Left colon (tissue), 2 donors: ENCODE measurements at regions of chr10 and their contacts with region 1.

Region 1: GRCh38 chr10:119207367-119207668 is at the start of gene GRK5:
- DNase-seq: peak; percentile 94
- ATAC-seq: peak; percentile 93
- total RNA-seq, gene GRK5: 7.8 to 12.4 TPM

Region 2: DNA sequence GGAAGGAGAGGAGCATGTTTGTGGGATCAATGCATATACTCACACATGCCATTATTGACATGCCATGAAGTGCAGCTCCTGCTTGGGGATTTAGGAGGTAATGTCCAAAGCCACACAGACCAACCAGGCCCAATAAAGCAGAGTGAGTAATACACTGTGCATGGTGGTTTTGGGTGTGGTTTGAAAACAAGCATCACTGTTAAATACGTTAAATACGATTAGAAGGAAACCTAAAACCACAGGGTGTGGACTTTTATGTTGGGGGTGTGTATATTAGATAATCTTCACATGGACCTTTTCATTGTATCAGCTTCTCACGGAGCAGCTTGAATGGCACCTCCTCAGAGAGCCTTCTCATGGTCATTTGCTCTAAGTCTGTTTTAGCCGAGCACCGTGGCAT is 116.3 kb before region 1 on chr10:
- intact Hi-C with region 1: no loop called
- DNase-seq: peak in 1 of 2 donors; percentile 56
- ATAC-seq: peak; percentile 84

Region 3: GRCh38 chr10:119341459-119342301 is 134.4 kb after region 1 on chr10:
- intact Hi-C with region 1: no loop called
- DNase-seq: peak in 1 of 2 donors; percentile 46
- ATAC-seq: no peak

Region 4: DNA sequence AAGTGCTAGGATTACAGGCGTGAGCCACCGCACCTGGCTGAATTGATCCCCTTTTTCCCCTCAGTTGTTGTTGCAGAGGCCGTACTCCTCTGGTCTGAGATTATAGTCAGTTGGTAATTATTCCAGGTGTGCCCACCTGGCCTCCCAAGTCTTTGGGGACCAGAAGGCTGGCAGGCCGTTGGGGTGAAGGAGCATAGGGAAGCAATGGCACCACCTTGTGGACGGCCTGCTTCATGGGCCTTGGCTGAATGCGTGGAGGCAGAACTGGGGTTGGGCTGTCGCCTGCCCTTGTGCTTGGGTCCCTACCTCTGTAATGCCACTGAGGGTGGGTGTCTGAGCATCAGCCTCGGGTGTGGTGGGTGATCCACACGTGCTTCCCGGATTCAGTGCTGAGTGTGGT is 209.5 kb after region 1 on chr10:
- intact Hi-C with region 1: loop called in 1 of 2 experiments (anchors 10 kb)
- DNase-seq: peak in 1 of 2 donors; percentile 82
- ATAC-seq: peak; percentile 82

Region 5: DNA sequence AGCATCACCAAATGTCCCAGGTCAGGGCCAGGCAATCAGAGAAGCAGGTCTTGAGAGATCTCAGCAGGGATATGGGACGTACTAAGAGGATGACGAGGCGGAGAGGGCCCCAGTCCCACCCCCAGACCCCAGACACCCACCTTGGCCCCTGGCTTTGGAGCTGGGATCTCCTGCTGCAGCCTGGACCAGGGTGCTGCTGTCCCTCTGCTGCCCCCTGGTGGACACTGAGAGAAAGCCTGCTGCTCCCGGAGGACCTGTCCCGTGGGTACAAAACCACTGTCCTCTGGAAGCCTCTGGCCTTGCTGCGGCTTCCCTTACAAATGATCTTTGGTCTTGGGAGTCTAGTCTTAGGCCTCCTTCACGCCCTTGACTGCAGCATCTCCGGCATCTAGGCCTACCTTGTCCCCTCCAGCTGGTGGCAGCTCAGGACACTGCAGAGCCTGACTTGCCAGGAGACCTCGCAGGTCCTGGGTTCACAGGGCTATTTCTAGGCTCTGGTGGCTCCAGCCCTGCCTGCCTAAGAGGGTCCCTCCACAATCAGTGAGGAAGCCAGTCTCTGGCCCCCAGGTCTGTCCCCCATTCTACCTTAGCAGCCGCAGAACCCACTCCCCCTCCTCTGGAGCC is 238.1 kb after region 1 on chr10:
- intact Hi-C with region 1: loop called in 1 of 2 experiments (anchors 10 kb)
- DNase-seq: peak; percentile 73 to 84
- ATAC-seq: peak; percentile 91